ENCODE measurements at regions of chr1 and their contacts with region 1.

Region 1: DNA sequence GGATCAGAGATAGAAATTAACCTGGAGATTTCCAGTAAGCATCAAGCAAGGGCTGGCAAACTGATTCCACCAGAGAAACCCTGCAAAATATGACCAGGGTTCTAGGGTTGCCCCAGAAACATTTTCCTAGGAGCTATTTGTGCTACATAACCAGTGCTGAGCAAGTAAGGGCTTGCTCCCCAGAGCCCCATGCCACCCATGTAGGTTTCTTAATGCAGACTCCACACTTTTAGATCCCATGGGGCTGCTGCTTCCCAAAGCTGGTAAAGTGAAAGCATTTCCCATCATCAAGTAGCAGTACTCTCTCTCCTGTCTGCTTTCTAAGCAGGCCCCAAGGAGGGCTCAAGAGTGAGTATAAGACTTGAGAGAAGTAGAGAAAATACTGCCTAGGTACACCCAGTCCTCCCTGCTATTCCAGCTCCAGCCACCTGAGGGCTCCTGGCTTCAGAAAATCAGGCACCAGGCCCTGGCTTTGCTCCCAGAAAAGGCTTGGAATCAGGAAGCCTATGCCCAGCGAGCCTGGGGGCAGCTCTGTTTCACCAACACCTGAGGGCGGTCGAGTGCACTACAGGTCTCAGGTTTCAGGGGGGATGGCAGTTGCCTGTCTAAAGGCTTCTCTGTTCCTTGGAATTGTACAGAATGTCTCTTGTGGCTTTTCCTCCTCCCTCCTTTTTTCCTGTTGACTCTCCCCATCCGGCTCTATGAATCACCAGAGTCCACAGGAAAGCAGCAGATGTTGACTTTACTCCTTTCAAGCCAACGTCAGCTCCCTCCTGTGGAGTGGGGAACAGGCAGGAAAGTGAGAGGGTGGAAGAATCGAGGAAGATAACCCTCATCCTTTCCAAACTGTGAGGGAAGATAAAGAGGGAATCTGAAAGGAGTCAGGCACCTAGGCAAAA is 6.2 kb upstream of the ANKRD35 start:
- DNase-seq: peak; percentile 66
- H3K4me3 Mint-ChIP-seq: no peak overlapping the region
- H3K27ac Mint-ChIP-seq: no peak overlapping the region
- H3K4me1 Mint-ChIP-seq: peaks cover under 1% of the 10 kb centered on the region
- H3K27me3 Mint-ChIP-seq: no peaks in the 10 kb centered on the region

Region 2: DNA sequence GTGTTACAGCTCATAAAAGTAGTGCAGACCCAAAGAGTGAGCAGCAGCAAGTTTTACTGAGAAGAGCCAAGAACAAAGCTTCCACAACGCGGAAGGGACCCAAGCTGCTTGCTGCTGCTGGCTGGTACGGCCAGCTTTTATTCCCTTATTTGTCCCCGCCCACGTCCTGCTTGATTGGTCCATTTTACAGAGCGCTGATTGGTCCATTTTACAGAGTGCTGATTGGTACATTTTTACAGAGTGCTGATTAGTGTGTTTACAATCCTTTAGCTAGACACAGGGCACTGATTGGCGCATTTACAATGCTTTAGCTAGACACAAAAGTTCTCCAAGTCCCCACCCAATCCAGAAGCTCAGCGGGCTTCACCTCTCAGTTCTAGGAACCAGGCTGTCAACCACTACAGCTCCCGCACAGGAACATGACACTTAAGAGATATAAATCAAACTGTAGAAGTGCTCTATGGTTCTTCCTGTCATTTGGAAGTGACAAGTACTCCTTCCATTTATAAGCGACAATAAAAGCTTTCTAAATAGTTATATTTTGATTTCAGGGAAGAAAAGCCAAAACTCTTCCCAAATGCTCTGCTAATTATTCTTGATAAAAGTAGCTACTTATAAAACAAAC is 96.5 kb before region 1 on chr1:
- CTCF ChIA-PET with region 1: no interaction called
- POLR2A ChIA-PET with region 1: no interaction called
- DNase-seq: no peak
- H3K4me3 Mint-ChIP-seq: no peak overlapping the region
- H3K27ac Mint-ChIP-seq: no peak overlapping the region
- H3K4me1 Mint-ChIP-seq: peaks cover 11% of the 10 kb centered on the region
- H3K27me3 Mint-ChIP-seq: no peaks in the 10 kb centered on the region

Region 3: GRCh38 chr1:145879775-145880174 is 12.1 kb before region 1 on chr1:
- CTCF ChIA-PET with region 1: interaction called, 10 read pairs
- POLR2A ChIA-PET with region 1: no interaction called
- DNase-seq: no peak
- H3K4me3 Mint-ChIP-seq: no peak overlapping the region
- H3K27ac Mint-ChIP-seq: no peak overlapping the region
- H3K4me1 Mint-ChIP-seq: peaks cover 2% of the 10 kb centered on the region
- H3K27me3 Mint-ChIP-seq: peaks cover 39% of the 10 kb centered on the region

Region 4: DNA sequence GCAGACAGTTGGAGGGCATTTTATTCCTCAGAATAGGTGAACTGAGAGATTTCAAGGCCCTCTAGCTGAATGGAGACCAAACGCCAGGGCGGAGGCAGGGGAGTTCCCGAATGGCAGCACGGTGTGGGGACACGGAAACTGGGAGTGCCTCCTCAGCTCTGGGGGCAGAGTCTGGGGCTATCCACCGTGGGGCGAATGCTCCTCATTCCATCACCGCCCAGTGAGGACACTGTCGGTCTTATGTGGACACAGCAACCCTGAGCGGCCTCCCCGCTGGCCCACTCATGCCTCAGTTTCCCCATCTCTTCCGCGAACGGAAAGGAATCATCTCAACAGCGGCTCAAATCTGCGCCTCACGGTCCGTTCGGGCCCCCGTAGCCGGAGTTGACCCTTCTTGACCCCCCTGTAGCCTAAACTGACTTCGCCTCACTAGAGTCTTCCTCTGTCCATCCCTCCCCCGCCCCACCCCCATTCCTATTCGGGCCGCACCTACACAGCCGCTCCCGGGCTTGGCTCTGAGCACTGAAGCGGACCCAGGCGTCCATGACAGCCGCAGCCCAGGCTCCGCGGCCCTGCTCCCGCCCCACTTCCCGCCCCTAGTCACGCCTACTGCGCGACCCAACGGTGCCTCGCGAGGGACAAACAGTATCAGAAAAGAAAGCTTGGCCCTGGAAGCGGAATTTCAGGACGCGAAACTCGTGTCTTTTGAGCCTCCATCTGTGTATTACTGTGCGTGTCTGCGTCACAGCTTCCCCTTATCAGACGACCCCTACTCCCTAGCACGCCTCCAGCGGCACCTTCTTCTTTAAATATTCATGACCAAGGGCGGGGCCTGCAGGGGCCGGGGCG is 26.5 kb after region 1 on chr1 and contains the start of gene PEX11B:
- CTCF ChIA-PET with region 1: no interaction called
- POLR2A ChIA-PET with region 1: no interaction called
- DNase-seq: peak; percentile 93
- H3K4me3 Mint-ChIP-seq: peak within 1 kb of the TSS; percentile 90
- H3K27ac Mint-ChIP-seq: peak within 1 kb of the TSS; percentile 98
- H3K4me1 Mint-ChIP-seq: peaks cover 37% of the 10 kb centered on the region
- H3K27me3 Mint-ChIP-seq: no peaks in the 10 kb centered on the region
- total RNA-seq, gene PEX11B: 36.9 to 44.6 TPM